ENCODE measurements at regions of chr7 and their contacts with region 1.

Region 1: DNA sequence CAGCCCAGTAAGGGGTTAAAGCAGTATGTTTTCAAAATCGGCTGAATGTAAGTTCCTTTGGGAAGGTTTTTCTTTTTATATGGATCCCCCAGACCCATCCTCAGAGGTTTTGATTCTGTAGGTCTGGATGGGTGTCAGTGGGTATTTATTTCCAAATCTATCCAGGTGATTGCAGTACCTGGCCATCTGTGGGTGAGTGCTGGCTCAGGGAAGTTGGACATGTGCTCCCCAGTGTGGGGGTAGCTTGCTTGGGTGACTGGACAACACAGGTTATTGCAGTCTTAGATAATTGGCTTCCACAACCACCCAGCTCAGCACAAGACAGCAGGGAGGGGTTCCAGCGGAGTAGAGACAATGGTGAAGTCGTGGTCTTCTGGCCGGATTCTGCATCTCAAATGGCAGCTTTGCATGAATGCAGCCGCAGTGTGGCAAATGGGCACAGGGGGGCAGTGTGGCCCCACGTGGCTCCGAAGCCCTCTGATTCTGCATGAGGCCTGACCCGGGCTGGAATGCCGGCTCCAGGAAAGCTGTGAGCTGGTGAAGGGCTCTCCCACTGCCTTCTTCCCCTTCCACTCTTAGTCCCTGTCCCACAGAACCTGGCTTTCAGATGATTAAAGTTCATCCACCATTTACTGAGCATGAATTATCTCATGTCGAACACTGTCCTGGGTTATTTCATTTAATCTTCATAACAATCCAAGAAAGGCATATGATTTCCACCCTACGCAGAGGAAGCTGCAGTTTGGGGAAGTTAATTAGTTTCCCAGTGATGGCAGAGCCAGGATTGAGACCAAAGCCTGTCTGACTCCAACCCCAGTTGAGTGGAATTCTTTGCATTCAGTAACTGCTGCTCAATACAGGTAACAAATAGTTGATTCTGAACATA is 64.5 kb upstream of the SYPL1 start:
- DNase-seq: peak; percentile 41 to 92
- H3K4me3 ChIP-seq: no peak overlapping the region
- H3K27ac ChIP-seq: no peak overlapping the region
- H3K4me1 ChIP-seq: no peaks in the 10 kb centered on the region
- H3K27me3 ChIP-seq: no peaks in the 10 kb centered on the region
- CTCF ChIP-seq: peak; percentile 91 to 98 (median 93)

Region 2: GRCh38 chr7:106196460-106197021 is 19.9 kb after region 1 on chr7:
- intact Hi-C with region 1: no loop called
- DNase-seq: no peak
- H3K4me3 ChIP-seq: no peak overlapping the region
- H3K27ac ChIP-seq: no peak overlapping the region
- H3K4me1 ChIP-seq: peaks cover 0 to 3% of the 10 kb centered on the region in 2 donors
- H3K27me3 ChIP-seq: no peaks in the 10 kb centered on the region
- CTCF ChIP-seq: no peak

Region 3: DNA sequence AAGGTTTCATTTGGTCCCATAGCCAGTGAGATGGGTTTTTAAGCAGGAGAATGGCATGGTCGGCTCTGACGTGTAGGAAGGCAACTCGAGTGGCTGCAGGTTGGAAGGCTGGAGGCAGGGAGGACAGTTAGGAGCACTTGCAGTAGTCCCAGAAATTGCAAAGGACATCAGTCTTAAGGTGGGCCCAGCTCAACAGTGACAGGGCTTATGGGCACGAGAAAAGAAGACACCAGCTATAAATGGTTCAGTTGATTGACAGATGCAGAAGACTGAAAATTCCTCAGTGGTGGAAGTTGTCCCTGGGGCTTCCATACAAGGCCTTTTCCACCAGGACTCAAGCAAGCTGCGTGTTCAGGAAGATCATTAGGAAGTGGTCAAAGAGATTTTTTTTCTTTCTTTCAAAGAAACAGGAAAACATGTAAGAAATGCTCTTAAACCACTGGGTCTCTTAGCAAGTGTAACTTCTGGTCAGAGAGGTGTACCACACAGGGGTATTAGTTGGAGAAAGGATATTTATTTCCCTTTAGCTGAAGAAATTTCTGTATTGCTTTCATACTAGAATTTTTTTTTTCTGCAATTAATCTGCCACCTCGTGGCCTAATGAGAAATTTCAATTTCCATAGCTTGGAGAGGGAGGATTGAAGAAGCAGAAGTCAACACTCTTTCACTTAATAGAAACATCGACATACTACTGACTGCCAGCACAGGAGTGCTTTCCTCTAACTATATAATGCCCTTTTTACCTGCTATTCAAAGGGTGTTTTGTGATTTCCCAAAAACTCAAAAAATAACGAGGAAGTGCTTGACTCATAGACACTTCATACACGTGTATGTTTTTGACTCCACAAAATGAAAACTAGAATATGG is 285.6 kb after region 1 on chr7:
- intact Hi-C with region 1: loop called (anchors 1 kb)
- DNase-seq: no peak
- H3K4me3 ChIP-seq: no peak overlapping the region
- H3K27ac ChIP-seq: no peak overlapping the region
- H3K4me1 ChIP-seq: no peaks in the 10 kb centered on the region
- H3K27me3 ChIP-seq: no peaks in the 10 kb centered on the region
- CTCF ChIP-seq: peak; percentile 26 to 57 (median 42)

Region 4: GRCh38 chr7:106736508-106737201 is 560.0 kb after region 1 on chr7:
- intact Hi-C with region 1: loop called (anchors 5 kb)
- DNase-seq: no peak
- H3K4me3 ChIP-seq: no peak overlapping the region
- H3K27ac ChIP-seq: no peak overlapping the region
- H3K4me1 ChIP-seq: no peaks in the 10 kb centered on the region
- H3K27me3 ChIP-seq: no peaks in the 10 kb centered on the region
- CTCF ChIP-seq: peak; percentile 16 to 53 (median 44)

Region 5: GRCh38 chr7:107150375-107151073 is 973.9 kb after region 1 on chr7:
- intact Hi-C with region 1: loop called (anchors 5 kb)
- DNase-seq: peak in 1 of 2 donors; percentile 88
- H3K4me3 ChIP-seq: no peak overlapping the region
- H3K27ac ChIP-seq: no peak overlapping the region
- H3K4me1 ChIP-seq: peaks cover 0 to 2% of the 10 kb centered on the region in 2 donors
- H3K27me3 ChIP-seq: no peaks in the 10 kb centered on the region
- CTCF ChIP-seq: peak; percentile 34 to 62 (median 51)